ENCODE measurements at regions of chr7 and their contacts with region 1.

Region 1: GRCh38 chr7:5450549-5451372 is 27.1 kb upstream of the TNRC18 start:
- DNase-seq: peak; percentile 52
- ATAC-seq: peak; percentile 68
- H3K4me3 ChIP-seq: no peak overlapping the region
- H3K4me3 Mint-ChIP-seq: no peak overlapping the region
- H3K27ac ChIP-seq: no peak overlapping the region
- H3K27ac Mint-ChIP-seq: no peak overlapping the region
- H3K4me1 ChIP-seq: no peaks in the 10 kb centered on the region
- H3K4me1 Mint-ChIP-seq: no peaks in the 10 kb centered on the region
- H3K27me3 ChIP-seq: peaks cover 0 to 4% (median 0%) of the 10 kb centered on the region in 4 experiments
- H3K27me3 Mint-ChIP-seq: peaks cover 2% of the 10 kb centered on the region
- CTCF ChIP-seq: peak; percentile 47

Region 2: GRCh38 chr7:4830176-4830575 is 620.6 kb before region 1 on chr7:
- CTCF ChIA-PET with region 1: no interaction called
- POLR2A ChIA-PET with region 1: no interaction called
- intact Hi-C with region 1: loop called (anchors 5 kb)
- DNase-seq: peak; percentile 63
- ATAC-seq: peak; percentile 72
- H3K4me3 ChIP-seq: no peak overlapping the region
- H3K4me3 Mint-ChIP-seq: no peak overlapping the region
- H3K27ac ChIP-seq: no peak overlapping the region
- H3K27ac Mint-ChIP-seq: no peak overlapping the region
- H3K4me1 ChIP-seq: no peaks in the 10 kb centered on the region
- H3K4me1 Mint-ChIP-seq: no peaks in the 10 kb centered on the region
- H3K27me3 ChIP-seq: no peaks in the 10 kb centered on the region
- H3K27me3 Mint-ChIP-seq: no peaks in the 10 kb centered on the region
- CTCF ChIP-seq: peak; percentile 64

Region 3: GRCh38 chr7:5462216-5462615 is 11.5 kb after region 1 on chr7:
- CTCF ChIA-PET with region 1: no interaction called
- POLR2A ChIA-PET with region 1: no interaction called
- intact Hi-C with region 1: no loop called
- DNase-seq: no peak
- ATAC-seq: no peak
- H3K4me3 ChIP-seq: no peak overlapping the region
- H3K4me3 Mint-ChIP-seq: no peak overlapping the region
- H3K27ac ChIP-seq: no peak overlapping the region
- H3K27ac Mint-ChIP-seq: no peak overlapping the region
- H3K4me1 ChIP-seq: peaks cover 7 to 8% of the 10 kb centered on the region in 2 donors
- H3K4me1 Mint-ChIP-seq: peaks cover 3% of the 10 kb centered on the region
- H3K27me3 ChIP-seq: peaks cover 0 to 9% (median 0%) of the 10 kb centered on the region in 4 experiments
- H3K27me3 Mint-ChIP-seq: peaks cover 3% of the 10 kb centered on the region
- CTCF ChIP-seq: no peak